ENCODE measurements at regions of chr4 and their contacts with region 1.

Region 1: GRCh38 chr4:158768555-158769174 is at the start of gene FNIP2:
- DNase-seq: peak; percentile 69 to 83 (median 70)
- ATAC-seq: peak; percentile 90
- H3K4me3 ChIP-seq: peak within 1 kb of the TSS; percentile 68
- H3K4me3 Mint-ChIP-seq: peak within 1 kb of the TSS; percentile 92 to 100 (median 99)
- H3K27ac ChIP-seq: peak within 1 kb of the TSS; percentile 80
- H3K27ac Mint-ChIP-seq: peak within 1 kb of the TSS; percentile 90 to 99 (median 98)
- H3K4me1 ChIP-seq: peaks cover 0 to 8% of the 10 kb centered on the region in 2 donors
- H3K4me1 Mint-ChIP-seq: peaks cover 21 to 52% (median 43%) of the 10 kb centered on the region in 7 donors
- H3K27me3 ChIP-seq: no peaks in the 10 kb centered on the region
- H3K27me3 Mint-ChIP-seq: peaks cover 0 to 5% (median 0%) of the 10 kb centered on the region in 5 donors
- total RNA-seq, gene FNIP2: 9.8 to 19.5 (median 11.5) TPM

Region 2: DNA sequence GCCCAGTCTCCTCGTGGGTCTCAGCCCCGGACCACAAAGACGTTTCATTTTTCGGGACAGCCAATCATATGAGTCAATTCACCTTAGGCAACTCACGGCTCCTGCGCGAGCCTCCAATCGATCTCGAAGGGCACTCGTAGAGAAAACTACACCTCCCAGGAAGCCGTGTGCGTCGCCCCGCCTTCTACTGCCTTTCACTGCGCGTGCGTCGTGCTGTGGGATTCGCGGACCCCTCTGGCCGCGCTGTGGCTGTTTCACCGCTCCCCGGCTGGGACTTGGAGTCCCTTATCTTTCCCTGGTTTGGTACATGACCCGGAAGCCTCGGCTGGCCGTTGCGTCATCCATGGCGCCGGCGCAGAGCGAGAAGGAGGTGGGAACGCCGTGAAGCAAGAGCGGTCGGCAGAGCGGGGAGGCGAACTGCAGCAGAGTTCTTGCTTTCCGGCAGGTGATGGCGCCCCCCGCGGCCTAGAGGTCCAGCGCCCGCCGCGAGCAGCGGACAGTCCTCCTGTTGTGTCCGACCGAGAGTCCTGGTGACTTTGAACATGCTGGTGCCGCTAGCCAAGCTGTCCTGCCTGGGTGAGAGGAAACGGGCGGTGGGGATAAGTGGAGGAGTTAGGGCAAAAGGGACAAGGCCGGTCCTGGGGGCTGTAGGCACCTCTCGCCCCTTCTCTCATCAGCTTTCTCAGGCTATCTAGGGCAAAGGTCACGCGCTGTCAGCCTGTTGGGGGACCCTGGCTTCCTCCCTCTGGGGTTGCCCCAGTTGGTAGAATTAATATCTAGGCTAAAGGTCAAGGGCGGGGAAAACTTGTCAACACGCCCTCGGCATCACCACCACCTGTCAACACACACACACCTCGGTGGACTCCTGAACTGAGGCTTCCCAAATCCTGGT is 96.5 kb before region 1 on chr4 and contains the start of gene ETFDH:
- CTCF ChIA-PET with region 1: no interaction called
- POLR2A ChIA-PET with region 1: no interaction called
- intact Hi-C with region 1: loop called (anchors 1 kb)
- DNase-seq: peak; percentile 91 to 99 (median 98)
- ATAC-seq: peak; percentile 88
- H3K4me3 ChIP-seq: peak within 1 kb of the TSS; percentile 80
- H3K4me3 Mint-ChIP-seq: peak within 1 kb of the TSS; percentile 88 to 99 (median 96)
- H3K27ac ChIP-seq: peak within 1 kb of the TSS; percentile 93
- H3K27ac Mint-ChIP-seq: peak within 1 kb of the TSS; percentile 91 to 99 (median 97)
- H3K4me1 ChIP-seq: peaks cover 13 to 16% of the 10 kb centered on the region in 2 donors
- H3K4me1 Mint-ChIP-seq: peaks cover 6 to 43% (median 35%) of the 10 kb centered on the region in 7 donors
- H3K27me3 ChIP-seq: no peaks in the 10 kb centered on the region
- H3K27me3 Mint-ChIP-seq: peaks cover 0 to 3% (median 0%) of the 10 kb centered on the region in 5 donors
- total RNA-seq, gene ETFDH: 12.5 to 25.8 (median 17.5) TPM

Region 3: DNA sequence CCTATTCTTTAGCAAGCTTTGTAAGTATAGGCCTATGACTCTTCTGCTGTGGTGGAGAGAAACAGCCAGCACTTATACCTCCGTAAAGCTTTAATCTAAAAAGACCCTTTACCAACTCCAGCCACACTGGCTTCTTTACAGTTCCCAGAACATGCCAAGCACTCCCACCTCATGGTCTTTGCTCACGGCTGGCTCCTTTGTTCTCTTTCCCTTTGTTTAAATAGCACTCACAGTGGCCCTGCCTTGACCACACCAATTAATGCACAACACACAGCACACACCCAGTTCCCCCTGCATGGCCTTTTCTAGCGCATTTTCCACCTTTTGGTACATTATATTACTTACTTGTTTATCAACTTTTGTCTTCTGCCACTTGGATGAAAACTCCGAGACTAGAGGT is 64.4 kb before region 1 on chr4:
- CTCF ChIA-PET with region 1: no interaction called
- POLR2A ChIA-PET with region 1: no interaction called
- intact Hi-C with region 1: no loop called
- DNase-seq: no peak
- ATAC-seq: no peak
- H3K4me3 ChIP-seq: no peak overlapping the region
- H3K4me3 Mint-ChIP-seq: no peak overlapping the region
- H3K27ac ChIP-seq: no peak overlapping the region
- H3K27ac Mint-ChIP-seq: peak overlapping the region in 1 of 9 donors; percentile 38
- H3K4me1 ChIP-seq: no peaks in the 10 kb centered on the region
- H3K4me1 Mint-ChIP-seq: no peaks in the 10 kb centered on the region
- H3K27me3 ChIP-seq: no peaks in the 10 kb centered on the region
- H3K27me3 Mint-ChIP-seq: no peaks in the 10 kb centered on the region

Region 4: GRCh38 chr4:158714937-158715336 is 53.7 kb before region 1 on chr4:
- CTCF ChIA-PET with region 1: no interaction called
- POLR2A ChIA-PET with region 1: no interaction called
- intact Hi-C with region 1: no loop called
- DNase-seq: no peak
- ATAC-seq: no peak
- H3K4me3 ChIP-seq: no peak overlapping the region
- H3K4me3 Mint-ChIP-seq: no peak overlapping the region
- H3K27ac ChIP-seq: no peak overlapping the region
- H3K27ac Mint-ChIP-seq: no peak overlapping the region
- H3K4me1 ChIP-seq: no peaks in the 10 kb centered on the region
- H3K4me1 Mint-ChIP-seq: peaks cover 3 to 15% (median 7%) of the 10 kb centered on the region in 7 donors
- H3K27me3 ChIP-seq: no peaks in the 10 kb centered on the region
- H3K27me3 Mint-ChIP-seq: no peaks in the 10 kb centered on the region

Region 5: GRCh38 chr4:158729716-158730559 is 38.7 kb before region 1 on chr4:
- CTCF ChIA-PET with region 1: no interaction called
- POLR2A ChIA-PET with region 1: interaction called, 6 read pairs
- intact Hi-C with region 1: loop called (anchors 2 kb)
- DNase-seq: peak; percentile 18 to 57 (median 44)
- ATAC-seq: peak; percentile 93
- H3K4me3 ChIP-seq: no peak overlapping the region
- H3K4me3 Mint-ChIP-seq: no peak overlapping the region
- H3K27ac ChIP-seq: no peak overlapping the region
- H3K27ac Mint-ChIP-seq: no peak overlapping the region
- H3K4me1 ChIP-seq: no peaks in the 10 kb centered on the region
- H3K4me1 Mint-ChIP-seq: peaks cover 0 to 23% (median 0%) of the 10 kb centered on the region in 7 donors
- H3K27me3 ChIP-seq: no peaks in the 10 kb centered on the region
- H3K27me3 Mint-ChIP-seq: peaks cover 26 to 42% (median 32%) of the 10 kb centered on the region in 5 donors

Region 6: GRCh38 chr4:158826057-158826456 is 57.4 kb after region 1 on chr4:
- CTCF ChIA-PET with region 1: no interaction called
- POLR2A ChIA-PET with region 1: no interaction called
- intact Hi-C with region 1: loop called in 1 of 2 experiments (anchors 2 kb)
- DNase-seq: no peak
- ATAC-seq: no peak
- H3K4me3 ChIP-seq: no peak overlapping the region
- H3K4me3 Mint-ChIP-seq: peak overlapping the region in 7 of 10 donors; percentile 1 to 82 (median 42)
- H3K27ac ChIP-seq: no peak overlapping the region
- H3K27ac Mint-ChIP-seq: peak overlapping the region in 8 of 9 donors; percentile 22 to 86 (median 48)
- H3K4me1 ChIP-seq: peaks cover 0 to 24% of the 10 kb centered on the region in 2 donors
- H3K4me1 Mint-ChIP-seq: peaks cover 20 to 64% (median 37%) of the 10 kb centered on the region in 7 donors
- H3K27me3 ChIP-seq: no peaks in the 10 kb centered on the region
- H3K27me3 Mint-ChIP-seq: no peaks in the 10 kb centered on the region

Region 7: DNA sequence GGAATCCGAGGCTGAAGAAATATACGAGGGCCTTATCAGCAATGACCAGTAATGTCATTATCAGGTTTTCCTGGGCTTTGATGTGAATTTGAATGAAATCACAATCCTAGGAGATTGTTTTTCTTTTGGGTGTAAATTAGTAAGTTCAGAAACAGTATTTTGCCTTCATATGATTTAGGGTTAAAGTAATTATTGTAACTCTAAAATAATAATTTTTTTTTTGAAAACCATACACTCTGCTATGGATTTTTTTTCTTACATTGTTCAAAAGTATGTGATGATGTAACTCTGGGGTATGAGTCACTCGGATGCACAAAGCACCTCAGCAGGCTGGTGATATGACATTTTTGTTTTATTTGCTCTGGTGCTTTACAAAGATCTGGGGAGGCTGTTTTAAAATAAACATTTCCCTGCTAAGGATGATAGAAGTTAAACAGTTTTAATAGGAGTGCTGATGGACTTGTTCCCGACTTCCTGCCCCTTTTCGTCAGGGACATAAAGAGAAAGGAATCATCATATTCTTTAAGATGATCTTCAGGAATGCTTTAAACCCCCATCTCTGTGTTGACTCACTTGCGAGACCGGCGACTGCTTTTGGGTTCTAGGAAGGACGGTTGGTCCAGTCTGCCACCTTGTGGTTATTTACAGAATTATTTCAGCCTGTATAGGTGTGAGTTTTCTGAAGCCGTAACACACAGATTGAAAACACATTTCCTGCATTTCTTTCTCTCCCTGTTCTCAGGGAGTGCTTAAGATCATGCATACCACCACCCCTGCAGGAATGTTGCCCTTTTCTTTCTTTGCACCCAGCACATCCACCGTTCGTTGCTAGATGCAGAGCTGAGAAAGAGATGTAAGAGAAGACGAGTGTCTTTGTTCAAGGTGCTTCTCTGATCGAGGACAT is 406.7 kb after region 1 on chr4:
- CTCF ChIA-PET with region 1: no interaction called
- POLR2A ChIA-PET with region 1: no interaction called
- intact Hi-C with region 1: loop called in 1 of 2 experiments (anchors 2 kb)
- DNase-seq: peak; percentile 9 to 76 (median 69)
- ATAC-seq: peak; percentile 91
- H3K4me3 ChIP-seq: no peak overlapping the region
- H3K4me3 Mint-ChIP-seq: peak overlapping the region in 3 of 10 donors; percentile 0 to 45 (median 24)
- H3K27ac ChIP-seq: no peak overlapping the region
- H3K27ac Mint-ChIP-seq: peak overlapping the region in 2 of 9 donors; percentile 6 to 76
- H3K4me1 ChIP-seq: peaks cover 0 to 4% of the 10 kb centered on the region in 2 donors
- H3K4me1 Mint-ChIP-seq: peaks cover 13 to 63% (median 31%) of the 10 kb centered on the region in 7 donors
- H3K27me3 ChIP-seq: no peaks in the 10 kb centered on the region
- H3K27me3 Mint-ChIP-seq: peaks cover 0 to 8% (median 0%) of the 10 kb centered on the region in 5 donors

Measured in naive thymus-derived CD4-positive, alpha-beta T cell (primary cell).